ENCODE measurements at regions of chr13 and their contacts with region 1.

Region 1: GRCh38 chr13:90709319-90709718 is 638.2 kb upstream of the MIR17HG start:
- DNase-seq: no peak
- ATAC-seq: no peak
- H3K4me3 ChIP-seq: no peak overlapping the region
- H3K4me3 Mint-ChIP-seq: no peak overlapping the region
- H3K27ac ChIP-seq: no peak overlapping the region
- H3K27ac Mint-ChIP-seq: no peak overlapping the region
- H3K4me1 ChIP-seq: no peaks in the 10 kb centered on the region
- H3K4me1 Mint-ChIP-seq: peaks cover 0 to 1% (median 0%) of the 10 kb centered on the region in 7 donors
- H3K27me3 ChIP-seq: no peaks in the 10 kb centered on the region
- H3K27me3 Mint-ChIP-seq: no peaks in the 10 kb centered on the region

Region 2: GRCh38 chr13:90867336-90867683 is 158.0 kb after region 1 on chr13:
- CTCF ChIA-PET with region 1: no interaction called
- POLR2A ChIA-PET with region 1: no interaction called
- intact Hi-C with region 1: loop called in 1 of 2 experiments (anchors 10 kb)
- DNase-seq: no peak
- ATAC-seq: peak; percentile 66
- H3K4me3 ChIP-seq: no peak overlapping the region
- H3K4me3 Mint-ChIP-seq: no peak overlapping the region
- H3K27ac ChIP-seq: no peak overlapping the region
- H3K27ac Mint-ChIP-seq: no peak overlapping the region
- H3K4me1 ChIP-seq: no peaks in the 10 kb centered on the region
- H3K4me1 Mint-ChIP-seq: peaks cover 0 to 2% (median 0%) of the 10 kb centered on the region in 7 donors
- H3K27me3 ChIP-seq: no peaks in the 10 kb centered on the region
- H3K27me3 Mint-ChIP-seq: no peaks in the 10 kb centered on the region